Endothelial cell of umbilical vein (primary cell): ENCODE measurements at regions of chr9 and their contacts with region 1.

Region 1: DNA sequence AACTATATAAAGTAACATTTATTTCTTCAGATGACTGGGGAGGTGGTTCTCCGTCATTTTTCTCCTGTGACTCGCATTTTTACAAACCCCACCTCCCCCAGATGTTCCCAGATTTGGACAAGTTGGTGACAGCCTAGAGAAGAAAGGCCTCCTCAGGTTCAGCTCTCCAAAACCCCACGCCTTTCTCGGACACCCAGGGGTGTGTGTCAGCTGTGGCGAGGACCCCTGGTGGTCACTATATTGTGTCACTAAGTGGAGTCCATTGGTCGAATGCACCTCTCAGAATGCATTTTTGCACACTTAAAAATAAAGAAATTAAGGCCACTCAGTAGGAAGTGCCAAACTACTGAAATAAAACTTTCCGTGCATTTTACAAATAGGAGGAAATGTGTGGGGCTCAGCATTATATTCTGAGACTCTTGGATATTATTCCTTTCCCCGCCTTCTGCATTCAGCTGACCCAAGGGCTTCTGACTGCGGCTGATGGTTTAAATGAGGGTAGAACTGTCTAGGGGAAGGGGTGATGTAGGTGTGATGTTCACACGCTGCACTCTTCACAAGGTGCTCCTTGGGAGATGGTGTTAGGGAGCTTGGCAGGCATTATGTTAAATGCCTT is 47.6 kb downstream of the ACO1 start:
- DNase-seq: peak; percentile 54
- H3K4me3 ChIP-seq: no peak overlapping the region
- H3K27ac ChIP-seq: peak overlapping the region; percentile 93
- H3K4me1 ChIP-seq: peaks cover 34% of the 10 kb centered on the region
- H3K27me3 ChIP-seq: no peaks in the 10 kb centered on the region
- CTCF ChIP-seq: peak; percentile 63 to 67
- POLR2A ChIP-seq: no peak

Region 2: GRCh38 chr9:32300373-32300772 is 131.7 kb before region 1 on chr9:
- CTCF ChIA-PET with region 1: no interaction called
- POLR2A ChIA-PET with region 1: no interaction called
- dilution Hi-C with region 1: no loop called
- intact Hi-C with region 1: no loop called
- DNase-seq: no peak
- H3K4me3 ChIP-seq: no peak overlapping the region
- H3K27ac ChIP-seq: no peak overlapping the region
- H3K4me1 ChIP-seq: no peaks in the 10 kb centered on the region
- H3K27me3 ChIP-seq: no peaks in the 10 kb centered on the region
- CTCF ChIP-seq: no peak
- POLR2A ChIP-seq: no peak

Region 3: DNA sequence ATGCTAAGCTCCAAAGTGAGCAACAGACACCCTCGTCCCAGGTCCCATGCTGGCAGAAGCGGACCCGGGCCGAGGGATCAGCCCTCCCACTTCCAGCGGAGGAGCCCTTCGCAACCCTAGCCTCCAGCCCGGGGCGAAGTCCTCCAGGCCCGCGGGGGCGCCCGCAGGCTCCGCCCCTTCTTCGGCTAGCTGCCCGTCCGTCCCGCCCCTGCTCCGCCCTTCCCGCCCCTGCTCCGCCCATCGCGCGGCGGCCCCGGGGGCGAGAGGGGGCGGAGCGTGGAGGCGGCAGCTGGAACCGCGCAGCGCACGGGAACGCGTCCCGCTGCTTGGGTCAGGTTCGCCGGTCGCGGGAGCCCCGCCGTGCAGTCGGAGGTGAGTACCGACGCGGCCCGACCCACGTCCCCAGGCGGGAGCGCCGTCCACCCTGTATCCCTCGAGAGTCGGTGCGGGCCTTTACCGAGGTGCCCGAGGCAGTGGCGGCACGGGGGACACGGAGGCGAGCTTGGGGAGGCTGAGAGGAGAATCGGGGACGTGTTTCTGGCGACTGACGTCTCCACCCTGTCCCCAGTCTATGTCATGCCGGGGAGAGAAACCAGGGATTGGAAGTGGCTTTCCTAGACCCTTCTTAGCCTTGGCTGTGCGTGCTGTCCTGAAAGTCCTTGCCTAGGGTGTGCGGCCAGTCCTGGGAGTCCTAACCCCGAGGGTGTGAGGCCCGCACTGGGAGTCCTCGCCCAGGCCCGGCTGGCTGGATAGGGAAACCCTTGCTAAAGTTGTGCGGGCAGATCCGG is 47.5 kb before region 1 on chr9 and contains the start of gene ACO1:
- CTCF ChIA-PET with region 1: interaction called, 383 read pairs
- POLR2A ChIA-PET with region 1: interaction called, 8 read pairs
- dilution Hi-C with region 1: no loop called
- intact Hi-C with region 1: loop called (anchors 1 kb)
- DNase-seq: peak; percentile 91
- H3K4me3 ChIP-seq: peak within 1 kb of the TSS; percentile 50 to 91 (median 78)
- H3K27ac ChIP-seq: peak within 1 kb of the TSS; percentile 51
- H3K4me1 ChIP-seq: peaks cover 28% of the 10 kb centered on the region
- H3K27me3 ChIP-seq: no peaks in the 10 kb centered on the region
- CTCF ChIP-seq: no peak
- POLR2A ChIP-seq: peak; percentile 74
- total RNA-seq, gene ACO1: 54.1 and 56.9 TPM in 2 replicates

Region 4: GRCh38 chr9:32502464-32502863 is 70.4 kb after region 1 on chr9:
- CTCF ChIA-PET with region 1: interaction called, 7 read pairs
- POLR2A ChIA-PET with region 1: no interaction called
- dilution Hi-C with region 1: no loop called
- intact Hi-C with region 1: loop called (anchors 2 kb)
- DNase-seq: peak; percentile 85
- H3K4me3 ChIP-seq: no peak overlapping the region
- H3K27ac ChIP-seq: peak overlapping the region; percentile 90
- H3K4me1 ChIP-seq: peaks cover 42% of the 10 kb centered on the region
- H3K27me3 ChIP-seq: no peaks in the 10 kb centered on the region
- CTCF ChIP-seq: no peak
- POLR2A ChIP-seq: no peak

Region 5: DNA sequence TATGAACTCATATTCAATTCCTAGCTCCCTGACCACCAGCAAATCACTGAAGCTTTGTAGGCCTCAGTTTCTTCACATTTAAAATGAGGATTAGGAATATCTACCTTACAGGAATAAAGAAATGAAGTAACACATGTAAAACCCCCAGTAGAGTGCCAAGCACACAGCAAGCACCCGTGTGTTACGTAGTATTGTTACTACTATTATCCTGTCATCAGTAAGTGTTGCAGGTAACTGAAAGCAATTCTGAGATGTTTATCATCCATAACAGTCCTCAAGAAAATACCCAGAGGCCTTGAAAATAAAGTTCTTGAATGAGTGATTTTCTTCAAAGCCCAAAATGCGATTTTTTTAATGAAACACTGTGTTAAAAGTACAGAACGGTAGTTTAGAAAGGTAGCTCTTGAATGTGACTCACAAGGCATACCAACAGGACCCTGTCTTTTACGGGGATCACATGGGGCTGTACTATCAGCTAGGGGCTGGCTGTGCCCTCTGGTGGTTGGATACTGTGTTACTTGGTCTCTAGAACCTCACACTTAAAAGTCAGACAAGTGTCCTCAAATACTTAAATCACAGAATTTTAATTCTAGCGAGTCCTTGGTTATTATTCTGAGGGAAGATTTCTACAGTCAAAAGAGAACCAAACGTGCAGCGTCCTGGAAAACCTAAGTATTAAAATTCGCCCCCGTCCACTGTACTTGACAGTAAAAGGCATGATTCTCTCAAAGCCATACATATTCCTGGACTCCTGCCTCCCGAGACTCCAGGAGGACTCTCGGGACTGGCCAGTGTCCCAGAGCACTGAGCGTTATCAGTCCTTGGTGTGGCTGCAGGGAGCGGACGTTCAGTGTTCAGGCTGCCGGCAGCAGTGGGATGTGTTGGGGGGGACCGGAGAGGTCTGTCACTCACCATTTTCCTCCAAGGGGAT is 140.2 kb after region 1 on chr9:
- CTCF ChIA-PET with region 1: interaction called, 20 read pairs
- POLR2A ChIA-PET with region 1: no interaction called
- dilution Hi-C with region 1: no loop called
- intact Hi-C with region 1: loop called (anchors 1 kb)
- DNase-seq: peak; percentile 88
- H3K4me3 ChIP-seq: peak overlapping the region; percentile 78 to 89 (median 88)
- H3K27ac ChIP-seq: peak overlapping the region; percentile 19
- H3K4me1 ChIP-seq: peaks cover 18% of the 10 kb centered on the region
- H3K27me3 ChIP-seq: peaks cover 0 to 4% of the 10 kb centered on the region in 2 experiments
- CTCF ChIP-seq: peak; percentile 74 to 80
- POLR2A ChIP-seq: no peak

Region 6: GRCh38 chr9:32589083-32589723 is 157.2 kb after region 1 on chr9:
- CTCF ChIA-PET with region 1: no interaction called
- POLR2A ChIA-PET with region 1: no interaction called
- dilution Hi-C with region 1: no loop called
- intact Hi-C with region 1: no loop called
- DNase-seq: peak; percentile 66
- H3K4me3 ChIP-seq: no peak overlapping the region
- H3K27ac ChIP-seq: no peak overlapping the region
- H3K4me1 ChIP-seq: no peaks in the 10 kb centered on the region
- H3K27me3 ChIP-seq: peaks cover 4 to 18% of the 10 kb centered on the region in 2 experiments
- CTCF ChIP-seq: peak; percentile 12 to 45
- POLR2A ChIP-seq: no peak

Region 7: DNA sequence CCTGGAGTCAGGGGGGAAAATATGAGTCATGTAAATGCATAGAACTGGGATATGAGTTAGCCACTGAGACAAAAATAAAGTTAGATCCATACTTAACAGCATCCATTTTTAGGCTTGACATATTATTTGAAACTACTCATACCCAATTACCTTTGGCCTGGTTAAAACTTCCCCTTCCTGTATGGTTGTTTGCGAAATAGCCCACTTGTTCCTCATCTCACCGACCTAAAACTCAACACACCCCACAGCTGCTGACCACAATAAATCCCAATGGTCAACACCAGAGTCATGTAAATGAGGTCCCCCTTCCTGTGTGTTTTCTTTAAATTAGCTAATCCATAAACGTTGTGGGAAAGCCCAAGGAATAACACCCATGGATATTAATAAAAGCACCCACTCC is 296.1 kb after region 1 on chr9:
- CTCF ChIA-PET with region 1: no interaction called
- POLR2A ChIA-PET with region 1: no interaction called
- dilution Hi-C with region 1: no loop called
- intact Hi-C with region 1: no loop called
- DNase-seq: no peak
- H3K4me3 ChIP-seq: no peak overlapping the region
- H3K27ac ChIP-seq: no peak overlapping the region
- H3K4me1 ChIP-seq: no peaks in the 10 kb centered on the region
- H3K27me3 ChIP-seq: no peaks in the 10 kb centered on the region
- CTCF ChIP-seq: no peak
- POLR2A ChIP-seq: no peak

Region 8: DNA sequence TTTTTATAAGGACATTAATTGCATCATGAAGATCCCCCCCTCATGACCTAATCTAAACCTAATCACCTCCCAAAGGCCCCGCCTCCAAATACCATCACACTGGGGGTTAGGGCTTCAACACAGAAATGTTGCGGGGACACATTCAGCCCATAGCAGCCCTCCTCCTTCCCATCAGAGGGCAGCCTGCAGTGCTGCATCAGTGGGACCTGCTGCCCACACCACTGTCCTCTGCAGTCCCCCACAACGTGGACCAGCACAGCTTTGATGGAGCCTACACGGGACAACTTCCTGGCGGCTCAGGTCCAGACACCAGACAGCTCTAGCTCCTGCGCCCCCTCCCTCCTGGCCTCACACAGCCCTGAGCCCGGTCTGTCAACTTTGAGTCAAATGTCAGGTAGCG is 499.1 kb after region 1 on chr9:
- CTCF ChIA-PET with region 1: no interaction called
- POLR2A ChIA-PET with region 1: no interaction called
- dilution Hi-C with region 1: no loop called
- intact Hi-C with region 1: no loop called
- DNase-seq: no peak
- H3K4me3 ChIP-seq: no peak overlapping the region
- H3K27ac ChIP-seq: no peak overlapping the region
- H3K4me1 ChIP-seq: peaks cover 22% of the 10 kb centered on the region
- H3K27me3 ChIP-seq: no peaks in the 10 kb centered on the region
- CTCF ChIP-seq: no peak
- POLR2A ChIP-seq: no peak

Region 9: DNA sequence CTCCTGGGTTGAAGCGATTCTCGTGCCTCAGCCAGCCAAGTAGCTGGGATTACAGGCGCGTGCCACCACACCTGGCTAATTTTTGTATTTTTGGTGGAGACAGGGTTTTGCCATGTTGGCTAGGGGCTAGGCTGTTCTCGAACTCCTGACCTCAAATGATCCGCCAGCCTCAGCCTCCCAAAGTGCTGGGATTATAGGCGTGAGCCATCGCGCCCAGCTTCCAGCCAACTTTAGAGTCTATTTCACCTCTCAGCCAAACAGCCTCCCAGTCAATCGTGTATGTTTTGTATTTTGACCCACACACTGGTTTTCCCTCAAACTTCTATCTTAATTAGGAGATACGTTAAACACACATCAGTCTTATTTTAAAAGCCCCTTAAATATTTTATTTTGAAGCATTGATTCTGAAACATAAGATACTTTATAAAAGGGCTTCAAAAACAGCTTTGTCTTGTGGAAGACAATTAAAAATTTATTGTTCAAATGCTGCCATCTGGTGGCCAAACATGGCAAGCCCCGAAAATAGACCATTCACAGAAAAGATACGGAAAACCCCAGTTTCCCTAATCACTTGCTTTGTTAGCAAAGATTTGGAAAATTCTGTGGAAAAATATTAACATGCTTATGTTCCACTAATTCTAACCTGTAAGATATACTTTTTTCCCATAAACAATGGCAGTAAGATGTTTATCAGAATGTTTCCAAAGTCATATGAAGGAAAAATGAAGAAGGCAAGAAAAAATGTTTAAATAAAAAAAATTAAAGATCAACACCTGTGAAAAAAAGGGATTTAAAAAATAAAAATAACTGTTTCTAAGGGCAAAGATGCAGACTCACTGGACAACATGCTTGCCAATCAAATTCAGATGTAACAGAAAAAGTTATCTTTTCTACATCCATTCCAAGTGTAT is 536.3 kb after region 1 on chr9:
- CTCF ChIA-PET with region 1: interaction called, 6 read pairs
- POLR2A ChIA-PET with region 1: no interaction called
- dilution Hi-C with region 1: no loop called
- intact Hi-C with region 1: loop called (anchors 5 kb)
- DNase-seq: peak; percentile 72
- H3K4me3 ChIP-seq: no peak overlapping the region
- H3K27ac ChIP-seq: no peak overlapping the region
- H3K4me1 ChIP-seq: peaks cover 6% of the 10 kb centered on the region
- H3K27me3 ChIP-seq: no peaks in the 10 kb centered on the region
- CTCF ChIP-seq: peak; percentile 50 to 63
- POLR2A ChIP-seq: no peak